ENCODE measurements at regions of chr16 and their contacts with region 1.

Region 1: DNA sequence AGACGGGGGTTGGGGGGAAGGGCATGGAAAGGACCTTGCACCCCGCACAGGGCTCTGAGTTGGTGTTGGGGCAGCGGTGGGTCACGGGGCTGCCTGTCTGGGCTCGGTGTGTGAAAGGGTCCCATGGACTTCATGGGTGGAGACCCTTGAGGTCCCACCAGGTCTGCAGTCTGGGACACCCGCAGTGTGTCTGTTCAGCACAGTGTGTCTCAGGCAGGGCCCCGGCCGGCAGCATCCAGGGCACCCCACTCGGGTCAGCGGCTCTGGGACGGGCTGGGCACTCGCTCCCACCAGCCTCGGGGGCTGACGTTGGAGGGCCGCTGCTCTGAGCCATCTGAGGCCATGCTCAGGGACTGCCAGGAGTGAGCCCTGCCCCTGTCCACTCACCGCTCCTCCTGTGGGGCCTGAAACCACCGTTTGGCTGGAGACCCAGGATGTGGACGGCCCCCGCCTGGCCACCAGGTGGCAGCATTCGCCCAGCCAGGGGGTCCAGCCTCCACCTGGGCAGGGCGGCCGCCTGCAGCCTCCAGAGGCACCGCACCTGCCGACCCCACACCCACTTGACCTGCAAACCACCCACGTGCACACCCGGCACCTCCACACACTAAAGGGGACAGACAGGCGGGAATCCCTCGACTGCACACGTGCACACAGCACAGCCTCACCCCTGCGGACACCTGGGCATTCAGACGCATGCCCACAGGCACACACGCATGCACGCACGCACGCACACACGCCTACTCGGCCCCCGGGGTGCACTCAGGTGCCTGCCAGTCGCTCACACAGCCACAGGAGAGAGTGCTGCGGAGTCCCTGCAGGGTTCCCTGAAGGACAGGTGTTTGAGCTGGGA is 10.1 kb upstream of the ZFPM1 start:
- DNase-seq: peak in 1 of 2 donors; percentile 94
- H3K4me3 ChIP-seq: no peak overlapping the region
- CTCF ChIP-seq: peak in 2 of 3 donors; percentile 24 to 85
- POLR2A ChIP-seq: no peak

Region 2: DNA sequence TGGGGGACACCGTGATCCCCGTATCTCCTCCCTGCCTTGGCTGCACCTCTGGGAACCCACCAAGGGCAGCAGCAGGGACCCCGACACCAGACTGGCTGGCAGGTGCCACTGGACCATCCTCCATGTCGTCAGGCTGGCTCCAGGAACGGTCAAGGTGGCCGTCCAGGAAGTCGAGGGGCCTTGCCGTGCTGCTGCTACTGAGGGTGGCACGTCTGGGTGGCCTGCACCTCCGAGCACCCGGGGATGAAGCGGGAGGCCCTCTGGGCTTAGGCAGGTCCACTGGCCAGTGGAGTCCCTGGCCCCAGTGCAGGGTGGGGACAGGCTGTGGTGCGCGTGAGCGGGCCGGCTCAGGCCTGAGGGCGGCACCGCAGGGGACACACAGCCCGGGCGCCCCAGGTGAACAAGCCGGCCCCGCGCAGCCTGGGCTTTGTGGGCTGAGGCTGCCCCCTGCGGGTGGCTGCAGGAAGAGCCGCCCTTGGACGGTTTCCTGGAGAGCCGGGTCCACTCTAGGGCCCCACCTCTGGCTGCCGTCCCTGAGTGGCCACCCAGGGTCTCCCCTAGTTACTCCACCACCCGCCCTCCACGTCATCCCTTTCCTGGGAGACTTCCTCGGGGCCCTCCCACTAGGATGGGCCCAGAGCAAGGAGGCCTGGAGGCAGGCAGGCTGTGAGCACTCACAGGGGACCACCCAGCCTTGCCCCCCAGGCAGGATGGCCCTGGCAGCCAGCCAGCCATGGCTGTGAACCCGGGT is 84.4 kb after region 1 on chr16:
- intact Hi-C with region 1: loop called (anchors 5 kb)
- DNase-seq: no peak
- H3K4me3 ChIP-seq: no peak overlapping the region
- CTCF ChIP-seq: peak in 1 of 3 donors; percentile 8
- POLR2A ChIP-seq: no peak

Region 3: GRCh38 chr16:88561485-88562369 is 118.8 kb after region 1 on chr16:
- intact Hi-C with region 1: loop called (anchors 5 kb)
- DNase-seq: peak in 1 of 2 donors; percentile 87
- H3K4me3 ChIP-seq: no peak overlapping the region
- CTCF ChIP-seq: no peak
- POLR2A ChIP-seq: no peak

Measured in lower leg skin (tissue), 4 donors.